SK-N-SH (cell line): ENCODE measurements at regions of chr19 and their contacts with region 1.

Region 1: GRCh38 chr19:12983542-12984142 is 11.6 kb upstream of the NFIX start:
- DNase-seq: peak; percentile 98
- H3K4me3 ChIP-seq: peak overlapping the region; percentile 34 to 39; a peak in 3 of 4 replicates
- H3K27ac ChIP-seq: peak overlapping the region in 1 of 2 experiments; percentile 2; a peak in 1 of 4 replicates
- H3K4me1 ChIP-seq: peaks cover 0 to 8% of the 10 kb centered on the region in 2 experiments; a peak in 1 of 4 replicates
- H3K27me3 ChIP-seq: no peaks in the 10 kb centered on the region
- CTCF ChIP-seq: peak; percentile 88
- EP300 ChIP-seq: no peak
- RAD21 ChIP-seq: peak; percentile 82

Region 2: GRCh38 chr19:12647490-12648071 is 336.1 kb before region 1 on chr19:
- CTCF ChIA-PET with region 1: no interaction called
- POLR2A ChIA-PET with region 1: no interaction called
- DNase-seq: peak; percentile 88
- H3K4me3 ChIP-seq: peak overlapping the region in 1 of 2 experiments; percentile 35; a peak in 3 of 4 replicates
- H3K27ac ChIP-seq: no peak overlapping the region
- H3K4me1 ChIP-seq: peaks cover 0 to 8% of the 10 kb centered on the region in 2 experiments; a peak in 1 of 4 replicates
- H3K27me3 ChIP-seq: no peaks in the 10 kb centered on the region
- CTCF ChIP-seq: no peak
- EP300 ChIP-seq: no peak
- RAD21 ChIP-seq: no peak

Region 3: GRCh38 chr19:13069415-13070359 is 86.0 kb after region 1 on chr19:
- CTCF ChIA-PET with region 1: interaction called, 369 read pairs
- POLR2A ChIA-PET with region 1: no interaction called
- DNase-seq: peak; percentile 76
- H3K4me3 ChIP-seq: no peak overlapping the region
- H3K27ac ChIP-seq: peak overlapping the region in 1 of 2 experiments; percentile 92; a peak in 2 of 4 replicates
- H3K4me1 ChIP-seq: peaks cover 0 to 70% of the 10 kb centered on the region in 2 experiments; a peak in 1 of 4 replicates
- H3K27me3 ChIP-seq: no peaks in the 10 kb centered on the region
- CTCF ChIP-seq: no peak
- EP300 ChIP-seq: peak in 1 of 2 experiments; percentile 50; a peak in 2 of 4 replicates
- RAD21 ChIP-seq: 0 out of 2 replicates have a peak, but pooled peaks have one; percentile 10

Region 4: DNA sequence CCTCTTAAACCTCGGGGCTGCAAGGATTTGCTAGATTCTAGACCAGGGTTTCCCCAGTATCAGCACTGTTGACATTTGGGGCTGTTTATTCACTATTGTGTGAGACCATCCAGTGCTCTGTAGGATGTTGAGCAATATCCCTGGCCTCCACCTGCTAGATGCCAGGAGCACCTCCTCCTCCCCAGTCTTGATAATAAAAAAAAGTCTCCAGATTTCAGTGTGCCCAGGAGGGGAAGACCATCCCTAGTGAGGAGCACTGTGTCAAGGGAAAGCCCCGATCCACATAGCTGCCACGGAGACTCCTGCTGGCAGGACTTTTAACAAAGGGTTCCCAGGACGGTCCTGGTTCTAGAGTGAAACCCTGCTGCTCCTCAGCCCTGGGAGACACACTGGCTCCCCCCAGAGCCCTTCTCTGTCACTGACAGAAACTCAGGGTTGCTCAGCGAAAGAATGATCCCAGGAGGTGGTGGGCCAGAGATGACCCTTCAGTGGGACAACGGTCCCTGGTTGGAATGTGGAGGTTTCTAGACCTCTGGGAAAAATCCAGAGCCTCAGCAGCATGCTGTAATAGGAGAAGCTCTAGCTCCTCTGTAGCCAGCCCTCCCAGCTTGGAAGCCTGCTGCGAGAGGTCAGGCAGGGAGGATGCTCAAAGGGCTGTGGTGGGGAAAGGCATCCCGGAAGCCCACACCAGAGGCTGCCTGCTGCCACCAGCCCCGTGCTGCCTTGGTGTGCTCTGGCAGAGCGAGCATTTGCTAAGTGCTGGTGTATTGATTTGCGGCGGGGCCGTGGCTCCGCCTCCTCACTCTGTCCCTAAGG is 98.8 kb after region 1 on chr19:
- CTCF ChIA-PET with region 1: interaction called, 34 read pairs
- POLR2A ChIA-PET with region 1: no interaction called
- DNase-seq: peak; percentile 66
- H3K4me3 ChIP-seq: no peak overlapping the region
- H3K27ac ChIP-seq: peak overlapping the region in 1 of 2 experiments; percentile 23; a peak in 2 of 4 replicates
- H3K4me1 ChIP-seq: peaks cover 10 to 33% of the 10 kb centered on the region in 2 experiments; a peak in 3 of 4 replicates
- H3K27me3 ChIP-seq: no peaks in the 10 kb centered on the region
- CTCF ChIP-seq: peak; percentile 23
- EP300 ChIP-seq: no peak
- RAD21 ChIP-seq: peak; percentile 61